Caco-2 (cell line): ENCODE measurements at regions of chr19 and their contacts with region 1.

Region 1: DNA sequence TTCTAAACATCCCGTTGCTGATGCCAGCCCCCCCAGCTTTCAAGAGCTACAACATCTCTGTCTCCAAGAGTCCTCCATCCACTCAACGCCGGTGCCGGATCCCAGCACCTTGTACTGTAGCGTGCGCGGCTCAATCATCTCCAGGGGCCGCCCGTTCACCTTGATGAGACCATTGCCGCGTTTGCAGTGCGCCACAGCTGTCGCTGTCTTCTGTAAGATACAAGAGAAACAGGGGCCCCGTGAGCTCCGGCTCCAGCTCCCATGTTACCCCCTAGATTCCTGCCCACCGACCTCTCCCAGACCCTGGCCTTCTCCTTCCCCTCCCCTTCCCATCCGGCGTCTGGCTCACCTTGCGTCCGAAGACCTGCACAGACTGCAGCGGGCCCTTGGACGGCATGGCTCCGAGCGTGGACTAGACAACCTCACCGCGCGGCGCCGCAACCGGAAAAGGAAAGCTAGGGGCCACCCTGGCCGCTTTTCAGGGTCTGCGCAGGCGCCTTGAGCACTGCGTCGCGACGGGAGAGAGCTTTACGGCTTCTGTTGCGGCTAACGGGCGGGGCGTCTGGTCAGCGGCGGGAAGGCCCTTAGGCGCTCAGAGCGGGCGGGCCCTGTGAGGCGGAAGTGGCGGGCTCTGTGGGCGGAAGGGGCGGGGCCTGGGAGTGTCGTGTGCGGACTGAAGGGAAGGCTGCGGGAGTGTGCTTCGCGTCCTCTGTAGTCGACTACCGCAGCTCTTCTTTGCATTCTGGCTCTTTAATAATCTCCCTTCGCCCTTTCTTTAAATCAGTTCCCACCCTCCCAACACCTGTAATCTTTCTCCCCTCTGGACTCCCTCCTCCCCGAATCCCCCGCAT is at the start of gene RPS16:
- DNase-seq: peak; percentile 99
- H3K4me3 ChIP-seq: peak within 1 kb of the TSS; percentile 63
- H3K4me3 Mint-ChIP-seq: peak within 1 kb of the TSS; percentile 87
- H3K27ac Mint-ChIP-seq: peak within 1 kb of the TSS; percentile 93
- H3K4me1 ChIP-seq: peaks cover 23% of the 10 kb centered on the region
- H3K4me1 Mint-ChIP-seq: peaks cover 23% of the 10 kb centered on the region
- H3K27me3 ChIP-seq: no peaks in the 10 kb centered on the region
- H3K27me3 Mint-ChIP-seq: no peaks in the 10 kb centered on the region
- CTCF ChIP-seq: no peak
- total RNA-seq, gene RPS16: 2,801 and 3,019 TPM in 2 replicates

Region 2: GRCh38 chr19:39277612-39278011 is 158.1 kb before region 1 on chr19:
- CTCF ChIA-PET with region 1: no interaction called
- POLR2A ChIA-PET with region 1: no interaction called
- intact Hi-C with region 1: no loop called
- DNase-seq: peak; percentile 89 to 91
- H3K4me3 ChIP-seq: no peak overlapping the region
- H3K4me3 Mint-ChIP-seq: peak overlapping the region; percentile 66
- H3K27ac Mint-ChIP-seq: peak overlapping the region; percentile 95
- H3K4me1 ChIP-seq: peaks cover 18% of the 10 kb centered on the region
- H3K4me1 Mint-ChIP-seq: peaks cover 10% of the 10 kb centered on the region
- H3K27me3 ChIP-seq: no peaks in the 10 kb centered on the region
- H3K27me3 Mint-ChIP-seq: no peaks in the 10 kb centered on the region
- CTCF ChIP-seq: no peak

Region 3: DNA sequence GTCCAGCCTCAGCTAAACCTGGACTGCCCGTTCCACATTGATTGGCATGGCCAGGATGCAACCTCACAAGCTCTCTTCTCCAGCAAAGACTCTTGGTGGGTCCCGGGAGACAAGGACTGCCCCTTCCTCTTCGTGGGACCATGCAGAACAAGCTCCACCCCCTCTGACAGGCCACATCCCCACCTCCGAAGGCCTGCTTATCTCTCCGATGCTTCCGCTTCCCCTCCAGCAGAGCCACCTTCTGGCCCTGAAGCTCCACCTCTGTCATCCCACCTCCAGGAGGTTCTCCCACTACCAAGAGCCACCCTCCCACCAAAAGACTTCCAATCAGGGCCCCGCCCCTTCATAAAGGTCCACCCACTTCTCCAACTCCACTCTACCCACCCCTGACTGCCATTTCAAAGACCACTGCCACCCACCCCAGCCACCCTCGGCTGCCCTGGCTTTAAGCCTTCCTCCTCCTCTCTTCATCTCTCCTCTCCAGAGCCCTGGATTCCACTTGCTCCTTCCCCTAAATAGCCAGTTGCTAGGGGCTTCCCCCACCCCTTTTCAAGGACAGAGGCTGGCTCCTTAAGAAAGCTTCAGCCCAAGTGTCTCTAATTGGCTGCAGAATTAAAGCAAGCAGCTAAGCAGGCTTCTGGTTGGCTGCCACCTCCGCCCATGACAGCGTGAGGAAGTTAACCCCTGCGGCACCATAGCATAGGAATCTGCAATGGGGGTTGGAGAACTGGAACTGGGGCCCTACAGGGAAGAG is 125.0 kb before region 1 on chr19:
- CTCF ChIA-PET with region 1: no interaction called
- POLR2A ChIA-PET with region 1: no interaction called
- intact Hi-C with region 1: no loop called
- DNase-seq: peak; percentile 51 to 62
- H3K4me3 ChIP-seq: no peak overlapping the region
- H3K4me3 Mint-ChIP-seq: peak overlapping the region; percentile 43
- H3K27ac Mint-ChIP-seq: peak overlapping the region; percentile 73
- H3K4me1 ChIP-seq: peaks cover 29% of the 10 kb centered on the region
- H3K4me1 Mint-ChIP-seq: peaks cover 28% of the 10 kb centered on the region
- H3K27me3 ChIP-seq: no peaks in the 10 kb centered on the region
- H3K27me3 Mint-ChIP-seq: no peaks in the 10 kb centered on the region
- CTCF ChIP-seq: no peak

Region 4: DNA sequence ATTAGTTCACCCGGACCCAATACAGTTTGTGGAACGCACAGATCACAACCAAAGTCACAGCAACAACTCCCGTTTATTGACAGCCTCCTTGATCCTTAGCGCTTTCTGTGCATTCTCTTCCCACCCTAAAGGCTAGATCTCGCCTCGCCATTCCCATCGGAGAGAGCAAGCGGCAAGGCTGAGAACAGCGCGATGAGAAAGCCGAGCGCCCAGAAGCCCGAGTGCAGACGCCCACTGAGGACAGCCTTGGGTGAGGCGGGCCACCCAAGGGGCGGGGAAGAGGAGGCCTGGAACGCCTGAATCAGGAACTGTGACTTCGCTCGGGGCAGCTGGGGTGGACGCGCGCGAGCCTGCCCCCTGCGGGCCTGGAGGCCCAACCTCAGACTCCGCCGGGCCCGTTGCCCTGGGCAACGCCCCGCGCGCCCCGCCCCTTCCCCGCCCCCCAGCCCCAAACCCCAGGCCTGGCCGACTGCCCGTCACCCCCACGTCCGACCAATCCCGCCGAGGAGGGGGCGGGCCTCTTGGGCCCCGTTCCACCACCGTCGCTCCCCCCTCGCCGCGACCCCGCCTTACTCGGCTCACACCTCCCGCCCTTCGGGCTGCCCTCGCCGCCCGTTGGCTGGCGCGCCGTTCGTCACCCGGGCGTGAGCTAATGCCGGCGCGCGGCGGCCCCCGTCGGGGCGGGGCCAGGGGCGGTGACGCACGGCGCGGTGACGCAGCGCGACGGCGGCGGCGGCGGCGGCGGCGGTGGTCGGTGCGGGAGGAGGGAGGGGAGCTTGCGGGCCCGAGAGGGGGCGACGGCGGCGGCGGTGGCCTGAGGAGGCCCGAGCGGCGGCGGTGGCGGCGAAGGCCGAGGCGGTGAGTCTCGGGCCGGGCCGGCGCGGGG is 93.8 kb before region 1 on chr19 and contains the start of gene SAMD4B:
- CTCF ChIA-PET with region 1: interaction called, 7 read pairs
- POLR2A ChIA-PET with region 1: interaction called, 22 read pairs
- intact Hi-C with region 1: no loop called
- DNase-seq: peak; percentile 99 to 100
- H3K4me3 ChIP-seq: peak within 1 kb of the TSS; percentile 71
- H3K4me3 Mint-ChIP-seq: peak within 1 kb of the TSS; percentile 100
- H3K27ac Mint-ChIP-seq: peak within 1 kb of the TSS; percentile 95
- H3K4me1 ChIP-seq: peaks cover 7% of the 10 kb centered on the region
- H3K4me1 Mint-ChIP-seq: peaks cover 47% of the 10 kb centered on the region
- H3K27me3 ChIP-seq: no peaks in the 10 kb centered on the region
- H3K27me3 Mint-ChIP-seq: no peaks in the 10 kb centered on the region
- CTCF ChIP-seq: peak; percentile 68 to 79
- total RNA-seq, gene SAMD4B: 132 and 147 TPM in 2 replicates

Region 5: GRCh38 chr19:39384839-39385568 is 50.7 kb before region 1 on chr19:
- CTCF ChIA-PET with region 1: no interaction called
- POLR2A ChIA-PET with region 1: no interaction called
- intact Hi-C with region 1: no loop called
- DNase-seq: no peak
- H3K4me3 ChIP-seq: no peak overlapping the region
- H3K4me3 Mint-ChIP-seq: no peak overlapping the region
- H3K27ac Mint-ChIP-seq: no peak overlapping the region
- H3K4me1 ChIP-seq: peaks cover 5% of the 10 kb centered on the region; the same call in 1 of the 2 replicates
- H3K4me1 Mint-ChIP-seq: peaks cover 18% of the 10 kb centered on the region
- H3K27me3 ChIP-seq: no peaks in the 10 kb centered on the region
- H3K27me3 Mint-ChIP-seq: no peaks in the 10 kb centered on the region
- CTCF ChIP-seq: no peak

Region 6: GRCh38 chr19:39397360-39398296 is 38.1 kb before region 1 on chr19:
- CTCF ChIA-PET with region 1: interaction called, 11 read pairs
- POLR2A ChIA-PET with region 1: interaction called, 33 read pairs
- intact Hi-C with region 1: no loop called
- DNase-seq: peak; percentile 94 to 95
- H3K4me3 ChIP-seq: no peak overlapping the region
- H3K4me3 Mint-ChIP-seq: peak overlapping the region; percentile 49
- H3K27ac Mint-ChIP-seq: peak overlapping the region; percentile 84
- H3K4me1 ChIP-seq: peaks cover 52% of the 10 kb centered on the region
- H3K4me1 Mint-ChIP-seq: peaks cover 34% of the 10 kb centered on the region
- H3K27me3 ChIP-seq: no peaks in the 10 kb centered on the region
- H3K27me3 Mint-ChIP-seq: no peaks in the 10 kb centered on the region
- CTCF ChIP-seq: peak; percentile 98

Region 7: DNA sequence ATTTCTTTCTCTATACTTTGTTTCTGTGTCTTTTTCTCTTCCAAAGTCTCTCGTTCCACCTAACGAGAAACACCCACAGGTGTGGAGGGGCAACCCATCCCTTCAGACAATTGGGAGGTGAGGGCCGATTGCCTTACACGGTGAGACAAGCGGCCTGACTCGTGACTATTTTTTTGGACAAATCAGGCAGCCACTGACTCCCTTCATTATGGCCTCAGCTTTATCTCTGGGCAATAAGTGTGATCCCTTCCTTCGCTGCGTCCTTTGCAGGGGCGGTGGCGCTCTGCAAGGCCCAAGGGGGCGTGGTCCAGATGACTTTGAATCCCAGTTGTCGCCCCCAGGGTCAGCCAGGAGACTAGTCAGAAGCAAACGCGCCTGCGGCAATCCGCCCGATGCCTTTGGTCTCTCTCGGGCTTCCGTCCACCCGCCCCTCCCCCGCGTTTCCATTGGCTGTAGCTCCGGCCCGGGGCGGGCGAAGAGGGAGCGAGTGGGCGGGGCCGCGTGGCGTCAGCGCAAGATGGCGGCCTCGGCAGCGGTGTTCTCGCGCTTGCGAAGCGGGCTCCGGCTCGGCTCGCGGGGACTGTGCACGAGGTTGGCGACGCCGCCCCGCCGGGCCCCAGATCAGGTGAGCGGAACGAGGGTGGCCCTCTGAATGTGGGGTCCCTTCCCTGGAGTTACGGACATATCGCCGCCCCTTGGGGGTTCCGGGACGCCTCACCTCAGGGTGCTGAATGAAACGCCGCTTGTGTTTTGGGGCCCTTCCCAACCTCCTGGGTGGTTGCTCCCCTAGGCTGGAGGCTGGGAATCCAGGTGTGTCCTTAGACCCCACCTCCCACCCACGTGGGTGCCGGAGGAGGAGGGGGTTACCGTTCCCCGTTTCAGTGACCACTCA is 44.9 kb after region 1 on chr19 and contains the start of gene TIMM50:
- CTCF ChIA-PET with region 1: interaction called, 5 read pairs
- POLR2A ChIA-PET with region 1: interaction called, 41 read pairs
- intact Hi-C with region 1: no loop called
- DNase-seq: peak; percentile 99 to 100
- H3K4me3 ChIP-seq: peak within 1 kb of the TSS; percentile 94
- H3K4me3 Mint-ChIP-seq: peak within 1 kb of the TSS; percentile 92
- H3K27ac Mint-ChIP-seq: peak within 1 kb of the TSS; percentile 81
- H3K4me1 ChIP-seq: 0 out of 2 replicates have a peak, but pooled peaks cover 5% of the 10 kb centered on the region
- H3K4me1 Mint-ChIP-seq: peaks cover 17% of the 10 kb centered on the region
- H3K27me3 ChIP-seq: no peaks in the 10 kb centered on the region
- H3K27me3 Mint-ChIP-seq: no peaks in the 10 kb centered on the region
- CTCF ChIP-seq: peak in 1 of 2 experiments; percentile 8
- total RNA-seq, gene TIMM50: 152 and 162 TPM in 2 replicates

Region 8: DNA sequence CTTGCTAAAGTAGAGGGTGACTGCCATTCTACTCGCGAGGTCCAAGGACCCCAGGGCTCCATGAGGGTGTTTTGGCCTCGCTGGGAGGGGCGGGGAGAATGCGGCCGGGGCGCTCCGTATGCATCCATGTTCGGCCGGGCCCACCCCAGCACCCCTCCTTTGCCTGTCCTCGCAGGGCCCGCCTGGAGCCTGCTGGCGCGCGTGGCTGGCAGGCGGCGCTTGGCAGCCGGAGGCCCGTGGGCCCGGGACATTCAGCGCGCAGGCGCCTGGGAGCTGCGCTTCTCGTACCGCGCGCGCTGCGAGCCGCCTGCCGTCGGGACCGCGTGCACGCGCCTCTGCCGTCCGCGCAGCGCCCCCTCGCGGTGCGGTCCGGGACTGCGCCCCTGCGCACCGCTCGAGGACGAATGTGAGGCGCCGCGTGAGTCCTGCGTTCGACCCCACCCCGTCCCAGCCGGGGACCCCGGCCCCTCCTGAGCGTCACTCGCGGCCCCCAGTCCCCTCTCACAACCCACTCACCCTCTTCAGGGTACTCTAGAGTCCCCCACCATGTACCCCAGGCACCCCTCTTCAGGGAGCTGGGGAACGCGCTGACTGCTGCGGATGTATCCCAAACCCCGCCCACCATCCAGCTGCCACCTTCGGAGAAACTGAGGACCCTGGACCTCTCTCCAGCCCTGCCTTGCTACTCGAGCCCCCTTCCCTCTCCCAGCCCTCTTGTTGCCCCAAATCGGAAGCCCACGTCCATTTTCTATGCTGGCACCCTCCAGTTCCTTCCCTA is 67.1 kb after region 1 on chr19:
- CTCF ChIA-PET with region 1: interaction called, 20 read pairs
- POLR2A ChIA-PET with region 1: interaction called, 13 read pairs
- intact Hi-C with region 1: no loop called
- DNase-seq: peak; percentile 67 to 90
- H3K4me3 ChIP-seq: peak overlapping the region; percentile 29
- H3K4me3 Mint-ChIP-seq: peak overlapping the region; percentile 64
- H3K27ac Mint-ChIP-seq: no peak overlapping the region
- H3K4me1 ChIP-seq: peaks cover 15% of the 10 kb centered on the region
- H3K4me1 Mint-ChIP-seq: peaks cover 16% of the 10 kb centered on the region
- H3K27me3 ChIP-seq: peaks cover 1% of the 10 kb centered on the region
- H3K27me3 Mint-ChIP-seq: peaks cover 31% of the 10 kb centered on the region
- CTCF ChIP-seq: peak; percentile 79 to 99